ENCODE measurements at regions of chr10 and their contacts with region 1.

Region 1: DNA sequence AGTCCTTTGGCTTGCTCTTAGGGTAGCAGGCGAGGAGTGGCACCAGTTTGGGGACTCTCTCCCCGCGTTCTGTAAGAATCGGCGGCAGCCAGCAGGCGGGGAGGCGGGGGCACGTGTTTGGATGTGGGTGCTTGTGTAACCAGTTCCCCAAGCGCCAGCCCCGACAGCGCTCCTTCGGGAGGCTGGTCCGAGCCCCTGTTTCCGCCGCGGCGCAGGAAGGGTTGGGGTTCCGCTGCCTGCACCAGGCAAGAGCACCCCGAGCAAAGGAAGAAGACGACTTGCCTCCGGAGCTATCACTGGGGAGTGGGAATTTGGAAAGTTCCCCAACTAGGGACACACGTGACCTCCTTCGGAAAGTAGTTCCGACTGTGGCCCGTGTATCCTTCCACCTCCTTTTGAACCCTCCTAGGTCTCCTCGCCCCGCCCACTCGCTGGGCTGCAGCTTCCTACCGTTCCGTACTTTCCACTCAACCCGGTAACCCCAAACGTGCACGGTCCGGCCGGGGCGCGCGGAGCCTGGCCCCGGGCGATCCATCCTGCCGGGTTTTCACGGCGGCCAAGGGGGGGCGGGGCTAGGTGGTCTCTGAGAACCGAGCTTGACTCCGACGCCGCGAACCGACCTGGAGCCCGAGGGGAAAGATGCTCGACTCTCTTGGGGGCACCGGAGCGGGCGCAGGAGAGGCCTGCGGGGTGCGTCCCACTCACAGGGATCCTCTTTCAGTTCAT is 1.2 kb downstream of the KLLN start:
- DNase-seq: peak; percentile 92 to 96
- ATAC-seq: peak; percentile 66 to 72
- H3K4me3 ChIP-seq: peak overlapping the region; percentile 83 to 91 (median 87)
- H3K27ac ChIP-seq: peak overlapping the region; percentile 86 to 97 (median 92)
- H3K4me1 ChIP-seq: peaks cover under 1 to 2% of the 10 kb centered on the region in 2 donors
- H3K27me3 ChIP-seq: no peaks in the 10 kb centered on the region
- CTCF ChIP-seq: no peak
- POLR2A ChIP-seq: peak; percentile 52 to 65

Region 2: DNA sequence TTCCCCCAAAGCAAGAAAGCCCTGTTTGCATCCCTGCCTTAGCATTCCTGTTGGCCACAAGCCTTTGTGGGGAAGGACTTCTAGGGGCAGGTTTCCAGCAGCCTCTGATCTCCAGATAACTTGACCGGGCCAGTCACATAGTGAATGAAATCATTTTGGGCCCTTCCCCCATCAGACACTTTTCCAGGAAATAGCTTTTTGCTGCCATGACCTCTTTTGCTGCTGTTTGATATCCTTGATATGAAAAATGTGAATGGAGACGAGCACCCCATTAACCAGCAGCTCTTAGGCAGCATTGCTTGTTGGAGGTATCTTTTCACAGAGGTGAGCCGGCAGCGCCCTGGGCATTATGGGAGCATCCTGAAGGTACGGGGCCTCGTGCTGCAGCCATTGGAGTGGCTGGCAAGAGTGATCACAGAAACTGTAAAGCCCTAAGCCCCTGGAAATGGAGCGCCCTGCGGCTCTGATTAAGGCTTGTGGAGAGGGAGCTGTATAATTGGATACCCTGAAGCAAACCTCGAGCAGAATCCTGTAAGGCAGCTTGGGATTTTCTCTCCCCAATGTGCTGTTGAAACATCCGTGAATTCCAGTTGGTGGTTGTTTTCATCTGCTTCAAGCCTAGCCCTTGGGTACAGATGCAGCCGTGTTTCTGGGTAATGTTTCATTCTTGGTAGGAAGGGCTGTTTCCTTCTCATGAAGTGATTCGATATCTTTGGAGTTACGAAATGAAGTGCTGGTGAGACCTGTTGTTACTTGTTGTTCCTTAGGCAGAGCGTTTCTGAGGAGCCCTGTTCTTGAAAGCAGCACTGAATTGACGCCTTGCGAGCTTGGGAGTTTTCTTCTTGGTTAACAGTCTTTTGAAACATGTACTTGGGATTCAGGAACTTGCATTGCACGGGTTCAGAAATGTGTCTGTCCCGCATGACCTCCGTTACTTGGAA is 180.3 kb after region 1 on chr10:
- in situ Hi-C with region 1: no loop called
- intact Hi-C with region 1: loop called (anchors 2 kb)
- DNase-seq: peak; percentile 72 to 76
- ATAC-seq: peak; percentile 94 to 95
- H3K4me3 ChIP-seq: peak overlapping the region in 3 of 4 donors; percentile 14 to 16 (median 16)
- H3K27ac ChIP-seq: peak overlapping the region; percentile 73 to 84 (median 80)
- H3K4me1 ChIP-seq: peaks cover 19 to 25% of the 10 kb centered on the region in 2 donors
- H3K27me3 ChIP-seq: no peaks in the 10 kb centered on the region
- CTCF ChIP-seq: no peak
- POLR2A ChIP-seq: peak in 1 of 2 donors; percentile 0

Region 3: DNA sequence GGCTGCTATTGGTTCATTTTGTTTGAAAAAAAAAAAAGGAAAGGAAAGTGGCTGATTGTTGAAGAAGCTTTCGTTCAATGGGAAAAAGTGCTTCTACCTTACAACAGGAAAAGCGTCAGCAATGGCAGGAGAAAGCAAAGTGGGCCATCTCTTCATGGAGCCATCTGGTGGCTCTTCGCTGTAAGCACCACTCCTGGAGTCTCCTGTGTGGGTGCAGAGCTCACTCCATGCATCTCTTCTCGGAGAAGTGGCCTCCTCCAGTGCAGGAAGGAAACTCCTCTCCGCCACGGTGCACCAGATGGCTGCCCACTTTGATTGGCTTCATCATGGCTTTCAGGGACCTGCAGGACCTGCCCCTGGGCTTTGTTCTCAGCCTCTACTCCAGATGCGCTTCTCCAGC is 252.3 kb after region 1 on chr10:
- in situ Hi-C with region 1: loop called in 2 of 4 experiments (anchors 10 to 25 kb)
- intact Hi-C with region 1: loop called (anchors 2 kb)
- DNase-seq: peak in 1 of 2 donors; percentile 40
- ATAC-seq: peak in 1 of 2 donors; percentile 45
- H3K4me3 ChIP-seq: no peak overlapping the region
- H3K27ac ChIP-seq: no peak overlapping the region
- H3K4me1 ChIP-seq: peaks cover 0 to 4% of the 10 kb centered on the region in 2 donors
- H3K27me3 ChIP-seq: no peaks in the 10 kb centered on the region
- CTCF ChIP-seq: peak; percentile 21 to 62 (median 47)
- POLR2A ChIP-seq: no peak

Region 4: GRCh38 chr10:88270871-88271713 is 409.0 kb after region 1 on chr10:
- in situ Hi-C with region 1: loop called in 1 of 4 experiments (anchors 25 kb)
- intact Hi-C with region 1: no loop called
- DNase-seq: no peak
- ATAC-seq: peak; percentile 50 to 71
- H3K4me3 ChIP-seq: no peak overlapping the region
- H3K27ac ChIP-seq: peak overlapping the region in 1 of 4 donors; percentile 47
- H3K4me1 ChIP-seq: no peaks in the 10 kb centered on the region
- H3K27me3 ChIP-seq: no peaks in the 10 kb centered on the region
- CTCF ChIP-seq: no peak
- POLR2A ChIP-seq: no peak

Region 5: DNA sequence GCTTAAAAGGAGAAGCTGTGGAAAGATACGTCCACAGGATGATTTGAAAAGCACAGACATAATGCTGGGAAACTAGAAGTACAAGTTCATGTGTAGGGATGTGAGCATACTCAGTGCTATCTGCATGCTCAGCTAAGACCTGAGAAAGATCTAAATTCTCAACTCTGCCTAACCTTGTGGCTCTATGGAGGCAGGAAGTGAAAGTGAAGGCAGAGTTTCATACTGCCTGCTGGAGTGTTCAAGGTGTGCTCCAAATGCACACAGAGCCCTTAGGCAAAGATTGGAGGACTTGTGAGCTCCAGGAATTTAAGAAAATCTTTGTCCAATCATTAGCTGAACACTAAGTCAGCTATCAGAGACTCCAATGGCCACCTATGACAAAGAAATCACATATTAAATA is 530.1 kb after region 1 on chr10:
- in situ Hi-C with region 1: loop called (anchors 5 to 10 kb)
- intact Hi-C with region 1: loop called (anchors 2 kb)
- DNase-seq: no peak
- ATAC-seq: no peak
- H3K4me3 ChIP-seq: no peak overlapping the region
- H3K27ac ChIP-seq: no peak overlapping the region
- H3K4me1 ChIP-seq: peaks cover 4 to 6% of the 10 kb centered on the region in 2 donors
- H3K27me3 ChIP-seq: no peaks in the 10 kb centered on the region
- CTCF ChIP-seq: no peak
- POLR2A ChIP-seq: no peak

Measured in gastrocnemius medialis (tissue), 4 donors.